ENCODE measurements at regions of chr17 and their contacts with region 1.

Region 1: GRCh38 chr17:75589012-75589918 is 1.7 kb downstream of the MYO15B start:
- DNase-seq: peak; percentile 93 to 96
- H3K4me3 ChIP-seq: peak overlapping the region; percentile 61
- H3K27ac ChIP-seq: peak overlapping the region; percentile 63 to 84
- H3K4me1 ChIP-seq: peaks cover 0 to 27% (median 19%) of the 10 kb centered on the region in 4 donors
- H3K27me3 ChIP-seq: peaks cover 0 to 12% of the 10 kb centered on the region in 2 donors
- CTCF ChIP-seq: peak; percentile 74 to 85

Region 2: GRCh38 chr17:75430159-75430974 is 158.9 kb before region 1 on chr17:
- intact Hi-C with region 1: loop called (anchors 5 kb)
- DNase-seq: peak in 1 of 2 donors; percentile 65
- H3K4me3 ChIP-seq: no peak overlapping the region
- H3K27ac ChIP-seq: peak overlapping the region; percentile 81 to 85
- H3K4me1 ChIP-seq: peaks cover 0 to 37% (median 20%) of the 10 kb centered on the region in 4 donors
- H3K27me3 ChIP-seq: no peaks in the 10 kb centered on the region
- CTCF ChIP-seq: no peak

Region 3: DNA sequence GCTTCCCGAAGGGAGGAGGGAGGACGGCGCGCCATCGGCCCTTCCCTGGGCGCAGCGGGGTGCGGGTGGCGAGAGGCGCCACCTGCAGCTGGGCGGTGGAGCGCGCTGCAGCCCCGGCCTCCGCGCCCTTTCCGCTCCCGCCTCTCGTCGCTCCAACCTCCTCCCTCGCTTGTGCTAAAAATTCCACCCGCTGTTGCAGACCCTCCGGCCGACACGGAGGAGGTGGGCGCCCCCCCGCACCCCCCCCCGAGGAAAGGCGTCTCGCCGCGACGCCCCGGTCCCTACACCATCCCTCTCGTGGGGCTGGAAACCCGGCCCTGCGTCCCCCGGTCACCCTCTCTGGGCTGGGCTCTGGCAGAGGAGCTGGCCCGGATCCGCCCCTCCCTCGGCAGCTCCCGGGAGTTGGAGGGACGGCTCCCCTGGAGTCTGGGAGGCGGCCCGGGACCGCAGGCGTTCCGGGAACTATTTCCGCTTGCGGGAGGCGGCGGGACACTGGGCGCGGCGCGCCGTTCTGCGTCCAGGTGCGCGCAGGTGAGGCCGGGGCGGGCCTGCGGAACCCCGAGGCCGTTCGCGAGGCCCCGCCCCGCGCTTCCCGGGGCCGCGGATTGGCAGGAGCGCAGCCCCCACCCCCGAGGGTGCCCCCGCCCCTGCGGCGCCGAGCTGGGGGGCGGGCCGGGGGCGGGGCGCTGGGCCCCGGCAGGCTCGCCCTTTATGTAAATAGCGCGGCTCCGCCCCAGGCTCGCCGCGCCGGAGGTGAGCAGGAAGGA is 64.1 kb before region 1 on chr17 and contains the start of gene LLGL2:
- intact Hi-C with region 1: loop called (anchors 5 kb)
- DNase-seq: peak; percentile 60 to 85
- H3K4me3 ChIP-seq: peak within 1 kb of the TSS; percentile 59 to 79
- H3K27ac ChIP-seq: peak within 1 kb of the TSS; percentile 65 to 70
- H3K4me1 ChIP-seq: peaks cover 0 to 21% (median 19%) of the 10 kb centered on the region in 4 donors
- H3K27me3 ChIP-seq: no peaks in the 10 kb centered on the region
- CTCF ChIP-seq: peak; percentile 48 to 52

Region 4: GRCh38 chr17:75632863-75633485 is 43.7 kb after region 1 on chr17 and contains the start of gene SMIM5:
- intact Hi-C with region 1: no loop called
- DNase-seq: peak; percentile 93 to 94
- H3K4me3 ChIP-seq: peak within 1 kb of the TSS in 1 of 2 donors; percentile 17
- H3K27ac ChIP-seq: peak within 1 kb of the TSS; percentile 72 to 76
- H3K4me1 ChIP-seq: peaks cover 10 to 27% (median 20%) of the 10 kb centered on the region in 4 donors
- H3K27me3 ChIP-seq: no peaks in the 10 kb centered on the region
- CTCF ChIP-seq: peak; percentile 93 to 97

Region 5: DNA sequence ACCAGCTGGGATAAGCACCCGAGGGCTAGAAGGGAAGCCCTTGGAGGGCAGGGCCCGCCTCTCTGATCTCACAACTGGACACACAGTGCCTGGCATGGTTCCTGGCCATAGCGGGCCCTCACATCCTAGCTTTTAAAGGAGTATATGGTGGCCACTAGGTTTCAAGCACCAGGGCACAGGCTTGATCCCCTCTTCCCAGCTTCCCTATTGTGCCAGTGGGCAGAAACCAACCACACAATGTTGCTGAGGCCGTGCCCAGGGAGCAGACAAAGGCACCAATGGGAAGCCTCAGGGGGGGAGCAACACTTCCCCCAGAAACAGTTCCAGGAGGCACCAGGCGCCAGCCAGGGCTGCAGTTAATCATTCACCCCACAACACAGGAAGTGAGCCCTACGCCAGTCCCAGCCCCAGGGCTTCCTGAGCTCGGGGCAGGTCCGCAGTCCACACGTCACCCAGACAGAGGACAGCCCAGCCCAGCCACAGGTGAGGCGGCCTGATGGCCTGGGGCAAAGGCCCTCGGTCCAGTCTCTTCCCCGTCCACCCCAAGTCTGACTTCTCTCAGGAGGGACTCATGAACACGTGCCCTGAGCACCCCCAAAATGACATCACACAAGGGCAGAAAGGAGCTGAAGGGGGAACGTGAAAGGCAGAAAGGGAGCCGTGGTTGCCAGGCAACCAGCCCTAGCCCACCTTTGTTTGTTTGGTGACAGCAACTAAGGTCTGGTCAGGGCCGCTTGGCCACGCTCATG is 56.8 kb after region 1 on chr17:
- intact Hi-C with region 1: no loop called
- DNase-seq: peak in 1 of 2 donors; percentile 44
- H3K4me3 ChIP-seq: no peak overlapping the region
- H3K27ac ChIP-seq: no peak overlapping the region
- H3K4me1 ChIP-seq: peaks cover 0 to 5% (median 0%) of the 10 kb centered on the region in 4 donors
- H3K27me3 ChIP-seq: no peaks in the 10 kb centered on the region
- CTCF ChIP-seq: no peak

Region 6: DNA sequence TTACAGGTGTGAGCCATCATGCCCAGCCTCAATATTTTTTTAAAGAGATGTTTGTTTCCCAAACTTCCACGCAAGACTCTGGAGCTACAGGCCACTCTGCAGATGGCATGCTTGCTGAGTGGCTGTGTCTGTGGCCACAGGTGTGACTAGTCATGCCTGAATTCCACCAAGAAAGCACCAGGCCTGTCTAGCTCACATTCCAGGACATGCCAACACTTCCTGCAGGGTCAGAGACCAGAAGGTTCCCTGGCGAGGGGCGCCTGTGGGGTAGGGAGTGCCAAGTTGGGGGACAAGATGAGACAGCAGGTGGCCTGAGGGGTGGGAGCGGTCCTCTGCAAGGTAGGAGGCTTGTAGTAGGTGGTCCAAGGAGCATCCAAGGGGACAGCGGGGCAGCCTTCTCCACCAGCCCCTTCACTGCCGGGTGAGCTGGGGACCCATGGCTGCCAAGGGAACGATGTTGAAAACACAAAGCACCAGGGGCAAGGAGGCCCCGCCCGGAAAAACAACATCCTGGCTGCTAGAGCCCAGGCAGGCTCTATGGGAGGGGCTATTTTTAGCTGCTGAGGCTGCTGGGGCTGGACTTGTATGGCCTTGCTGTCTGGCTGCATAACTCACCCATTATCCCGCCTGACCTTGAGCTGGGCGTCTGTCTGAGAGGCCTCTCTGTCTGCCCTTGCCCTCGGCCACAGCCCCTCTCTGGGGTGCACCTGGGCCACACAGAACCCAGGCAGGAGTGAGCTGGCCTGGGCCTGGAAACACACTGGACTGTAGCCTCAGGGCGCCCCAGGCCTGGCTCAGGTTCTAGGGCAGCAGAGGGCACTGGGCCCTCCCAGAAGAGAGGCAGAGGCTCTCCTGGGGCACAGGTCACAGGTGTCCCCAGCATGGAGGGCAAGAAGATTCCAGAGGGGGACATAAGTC is 283.4 kb after region 1 on chr17:
- intact Hi-C with region 1: no loop called
- DNase-seq: peak; percentile 92 to 96
- H3K4me3 ChIP-seq: peak overlapping the region in 1 of 2 donors; percentile 20
- H3K27ac ChIP-seq: peak overlapping the region; percentile 87 to 97
- H3K4me1 ChIP-seq: peaks cover 23 to 89% (median 81%) of the 10 kb centered on the region in 4 donors
- H3K27me3 ChIP-seq: no peaks in the 10 kb centered on the region
- CTCF ChIP-seq: no peak

Measured in tibial artery (tissue), 4 donors.